ENCODE measurements at regions of chr14 and their contacts with region 1.

Region 1: DNA sequence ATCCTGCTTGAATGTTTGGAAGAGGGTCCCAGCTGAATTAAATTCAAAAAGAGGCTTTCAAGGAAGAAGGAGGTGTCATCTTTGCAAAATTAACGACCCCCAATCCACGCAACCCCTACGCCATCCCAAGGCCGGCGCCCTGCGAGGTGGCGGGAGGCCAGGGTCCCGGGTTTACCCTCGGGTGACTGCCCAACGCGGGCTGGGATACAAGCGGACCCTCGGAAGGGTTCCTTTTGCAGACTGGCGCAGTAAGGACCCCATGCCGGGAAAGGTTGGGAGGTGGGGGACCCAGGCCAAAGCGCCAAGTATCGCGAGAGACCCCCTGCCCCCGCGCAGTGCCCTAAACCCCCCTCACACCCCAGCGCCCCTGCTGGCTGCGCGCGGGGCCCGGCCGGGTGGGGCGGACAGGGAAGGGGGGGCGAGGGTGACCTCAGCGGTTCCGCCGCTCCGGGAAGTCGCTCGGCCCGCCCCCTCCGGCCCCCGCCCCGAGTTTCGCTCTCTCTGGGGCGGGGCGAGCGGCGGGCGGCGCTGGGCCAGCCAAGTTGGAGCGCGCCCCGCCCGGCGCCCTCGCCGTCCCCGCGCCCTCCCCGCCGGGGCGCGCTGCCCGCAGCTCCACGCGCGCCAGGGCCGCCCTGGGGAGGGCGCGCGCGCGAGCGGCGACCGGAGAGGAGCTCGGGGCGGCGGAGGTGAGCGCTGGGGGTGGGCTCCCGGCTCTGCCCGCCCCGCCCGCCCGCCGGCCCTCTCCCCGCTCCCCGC is 708 bp upstream of the ZBTB42 start:
- DNase-seq: peak; percentile 96
- ATAC-seq: peak; percentile 82

Region 2: GRCh38 chr14:103770902-103771301 is 1029.3 kb before region 1 on chr14:
- intact Hi-C with region 1: no loop called
- DNase-seq: no peak
- ATAC-seq: no peak

Region 3: GRCh38 chr14:104604459-104605449 is 195.4 kb before region 1 on chr14 and contains the start of gene TMEM179:
- intact Hi-C with region 1: no loop called
- DNase-seq: no peak
- ATAC-seq: peak; percentile 57
- total RNA-seq, gene TMEM179: not detected

Region 4: DNA sequence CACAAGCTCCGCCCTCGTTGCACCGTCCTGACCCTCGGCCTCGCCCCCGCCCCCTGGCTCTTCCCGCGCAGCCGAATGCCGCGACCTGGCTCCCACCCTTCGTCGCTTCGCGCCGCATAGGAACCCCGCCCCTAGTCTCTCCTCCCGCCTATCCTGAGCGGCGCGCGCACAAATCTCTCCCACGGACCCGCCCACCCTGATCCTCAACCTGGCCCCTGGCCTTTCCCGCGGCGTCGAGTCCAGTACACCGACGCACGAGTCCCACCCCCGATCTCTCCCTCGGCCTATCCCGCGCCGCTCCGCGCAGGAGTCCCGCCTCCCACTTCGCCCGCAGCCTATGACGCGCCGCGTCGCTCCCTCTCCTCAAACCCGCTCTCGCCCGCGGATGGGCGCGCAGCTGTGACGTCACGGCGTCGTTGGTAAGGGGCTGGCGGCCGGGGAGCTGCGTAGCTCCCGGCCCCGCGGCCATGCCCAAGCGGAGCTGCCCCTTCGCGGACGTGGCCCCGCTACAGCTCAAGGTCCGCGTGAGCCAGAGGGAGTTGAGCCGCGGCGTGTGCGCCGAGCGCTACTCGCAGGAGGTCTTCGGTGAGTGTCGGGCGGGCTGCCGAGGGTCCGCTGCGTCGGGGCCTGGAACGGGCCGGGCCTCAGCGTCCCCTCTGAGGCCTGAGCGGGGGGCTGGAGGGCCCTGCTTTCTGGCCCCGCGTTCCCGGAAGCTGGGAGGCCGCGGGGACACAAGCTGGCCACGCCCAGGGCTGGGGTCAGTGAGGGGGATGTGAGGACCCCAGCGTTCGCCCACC is 47.3 kb before region 1 on chr14 and contains the start of gene SIVA1:
- intact Hi-C with region 1: loop called (anchors 5 kb)
- DNase-seq: peak; percentile 100
- ATAC-seq: peak; percentile 97
- total RNA-seq, gene SIVA1: 54.4 TPM

Region 5: DNA sequence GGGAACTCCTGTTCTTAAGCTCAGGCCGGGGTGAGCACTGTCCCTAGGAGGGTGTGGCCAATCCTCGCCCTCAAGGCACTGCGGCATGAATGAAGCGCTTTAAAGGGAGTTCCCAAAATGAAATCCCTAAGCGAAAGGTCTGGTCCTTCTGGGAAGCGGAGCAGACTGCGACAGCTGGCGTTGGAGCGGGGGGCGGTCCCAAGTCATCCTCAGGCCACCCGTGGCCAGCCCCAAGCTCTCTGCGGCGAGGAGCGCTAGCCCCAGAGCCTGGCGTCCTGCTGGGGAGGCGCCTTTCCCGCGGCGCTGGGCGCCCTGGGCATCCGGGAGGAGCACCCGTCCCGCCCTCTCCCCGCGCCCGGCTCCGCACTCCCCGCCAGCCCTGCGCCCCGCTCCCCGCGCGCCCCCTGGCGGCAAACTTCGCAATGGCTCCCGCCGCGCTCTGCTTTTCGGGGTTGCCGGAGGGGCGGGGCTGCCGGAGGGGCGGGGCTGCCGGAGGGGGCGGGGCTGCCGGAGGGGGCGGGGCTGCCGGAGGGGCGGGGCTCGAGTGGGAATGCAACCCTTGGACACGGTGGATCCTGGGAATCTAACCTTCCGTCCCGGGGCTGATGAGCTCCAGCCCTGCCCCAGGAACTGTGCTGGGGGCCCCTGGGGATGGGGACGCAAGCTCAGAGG is 26.1 kb after region 1 on chr14:
- intact Hi-C with region 1: loop called (anchors 1 kb)
- DNase-seq: peak; percentile 95
- ATAC-seq: peak; percentile 92

Region 6: DNA sequence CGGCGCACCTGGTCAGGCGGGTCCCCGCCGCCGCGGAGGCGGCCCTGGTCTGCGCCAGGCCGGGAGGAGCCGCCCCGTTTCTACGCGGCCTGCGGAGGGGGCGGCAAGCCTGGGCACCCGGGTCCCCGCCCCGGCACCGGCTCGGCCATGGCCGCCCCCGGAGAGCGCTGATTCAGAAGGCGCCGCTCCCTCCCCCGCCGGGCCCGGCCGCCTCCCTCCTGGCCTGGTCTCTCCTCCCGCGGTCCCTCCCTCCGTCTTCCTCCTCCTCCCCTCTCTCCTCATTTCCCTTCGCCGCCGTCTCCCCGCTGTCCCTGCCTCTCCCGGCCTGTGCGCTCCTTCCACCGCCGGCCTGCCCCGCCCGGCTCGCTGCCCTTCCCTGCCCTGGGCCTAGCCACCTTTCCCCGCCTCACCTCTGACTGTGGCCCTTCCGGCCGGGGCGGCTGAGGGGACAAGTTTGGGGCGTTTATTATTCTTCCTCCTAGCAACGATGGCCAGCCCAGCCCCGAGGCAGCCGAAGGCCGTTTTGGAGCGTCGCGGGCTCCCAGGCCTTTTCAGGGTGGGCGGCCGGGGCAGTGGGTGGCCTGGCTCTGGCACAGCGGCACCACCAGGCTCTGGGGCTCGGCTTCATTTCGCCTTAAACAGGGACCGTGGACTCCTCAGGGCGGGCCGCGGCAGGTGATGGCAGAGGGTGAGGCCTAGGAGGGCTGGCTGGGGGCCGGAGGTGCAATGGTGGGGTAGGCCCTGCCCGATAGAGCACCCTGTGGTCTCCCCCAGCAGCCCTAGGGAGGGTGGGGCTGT is 65.7 kb after region 1 on chr14:
- intact Hi-C with region 1: no loop called
- DNase-seq: no peak
- ATAC-seq: peak; percentile 81